ENCODE measurements at regions of chr17 and their contacts with region 1.

Region 1: DNA sequence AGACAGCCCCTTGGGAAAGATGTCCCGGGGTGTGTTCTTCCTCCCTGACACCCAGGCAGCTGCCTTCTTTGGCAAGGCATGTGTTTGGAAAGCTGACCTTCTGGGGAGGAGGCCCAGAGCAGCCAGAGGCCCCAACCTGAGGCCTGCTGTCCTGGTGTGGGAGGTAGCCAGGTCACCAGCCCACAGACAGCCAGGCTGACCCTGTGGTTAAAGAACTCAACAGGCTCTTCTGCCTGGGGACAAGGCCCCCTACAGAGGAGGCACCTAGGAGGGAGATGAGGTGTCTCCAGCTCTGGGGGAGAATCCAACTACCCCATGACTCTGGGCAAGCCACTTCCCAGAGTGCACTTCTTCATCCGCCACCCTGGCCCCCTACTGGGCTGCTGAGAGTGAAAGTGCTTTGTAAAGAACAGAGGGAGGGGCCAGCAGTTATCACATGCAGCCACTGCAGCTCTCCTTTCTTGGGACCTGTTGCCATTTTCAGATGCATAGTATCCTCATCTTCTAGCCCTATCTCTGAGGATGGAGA is 13.1 kb upstream of the SREBF1 start:
- DNase-seq: peak; percentile 72
- H3K4me3 Mint-ChIP-seq: peak overlapping the region; percentile 61
- H3K27ac Mint-ChIP-seq: peak overlapping the region; percentile 86
- H3K4me1 Mint-ChIP-seq: peaks cover 71% of the 10 kb centered on the region
- H3K27me3 Mint-ChIP-seq: no peaks in the 10 kb centered on the region

Region 2: GRCh38 chr17:17812211-17813057 is 37.5 kb before region 1 on chr17:
- intact Hi-C with region 1: loop called (anchors 1 kb)
- DNase-seq: peak; percentile 40
- H3K4me3 Mint-ChIP-seq: no peak overlapping the region
- H3K27ac Mint-ChIP-seq: no peak overlapping the region
- H3K4me1 Mint-ChIP-seq: peaks cover 5% of the 10 kb centered on the region
- H3K27me3 Mint-ChIP-seq: no peaks in the 10 kb centered on the region

Region 3: GRCh38 chr17:17823433-17824118 is 26.3 kb before region 1 on chr17:
- intact Hi-C with region 1: loop called (anchors 1 kb)
- DNase-seq: peak; percentile 82
- H3K4me3 Mint-ChIP-seq: peak overlapping the region; percentile 80
- H3K27ac Mint-ChIP-seq: peak overlapping the region; percentile 91
- H3K4me1 Mint-ChIP-seq: peaks cover 92% of the 10 kb centered on the region
- H3K27me3 Mint-ChIP-seq: no peaks in the 10 kb centered on the region

Region 4: DNA sequence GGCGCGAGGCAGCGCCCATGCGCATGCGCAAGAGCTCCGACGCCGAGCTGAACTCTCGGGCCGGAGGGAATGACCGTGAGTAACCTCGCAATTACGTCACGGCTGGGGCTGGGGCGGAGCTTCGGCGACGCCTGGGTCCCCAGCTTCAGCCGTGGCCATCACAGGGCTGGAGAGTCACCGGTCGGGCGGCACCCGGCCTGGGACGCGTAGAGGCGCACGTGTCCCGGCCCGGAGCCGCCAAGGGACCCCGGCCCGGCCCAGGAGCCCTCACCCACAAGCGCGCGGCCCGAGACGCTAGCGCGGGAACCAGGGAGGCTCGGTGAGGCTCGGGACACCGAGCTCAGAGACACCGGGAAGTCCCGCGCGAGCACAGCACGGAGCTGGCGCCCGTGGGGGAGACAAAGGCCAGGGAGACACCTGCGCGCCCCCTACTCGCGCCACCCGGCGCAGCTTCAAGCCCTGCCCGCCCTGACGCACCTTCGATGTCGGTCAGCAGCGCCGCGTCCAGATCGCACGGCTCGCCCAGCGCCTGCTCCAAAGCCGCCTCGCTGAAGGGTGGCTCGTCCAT is 13.6 kb before region 1 on chr17:
- intact Hi-C with region 1: loop called (anchors 1 kb)
- DNase-seq: peak; percentile 95
- H3K4me3 Mint-ChIP-seq: peak overlapping the region; percentile 93
- H3K27ac Mint-ChIP-seq: peak overlapping the region; percentile 86
- H3K4me1 Mint-ChIP-seq: peaks cover 69% of the 10 kb centered on the region
- H3K27me3 Mint-ChIP-seq: no peaks in the 10 kb centered on the region

Region 5: GRCh38 chr17:17959520-17960361 is 109.8 kb after region 1 on chr17:
- intact Hi-C with region 1: loop called (anchors 1 kb)
- DNase-seq: no peak
- H3K4me3 Mint-ChIP-seq: peak overlapping the region; percentile 85
- H3K27ac Mint-ChIP-seq: peak overlapping the region; percentile 100
- H3K4me1 Mint-ChIP-seq: peaks cover 55% of the 10 kb centered on the region
- H3K27me3 Mint-ChIP-seq: no peaks in the 10 kb centered on the region

Region 6: DNA sequence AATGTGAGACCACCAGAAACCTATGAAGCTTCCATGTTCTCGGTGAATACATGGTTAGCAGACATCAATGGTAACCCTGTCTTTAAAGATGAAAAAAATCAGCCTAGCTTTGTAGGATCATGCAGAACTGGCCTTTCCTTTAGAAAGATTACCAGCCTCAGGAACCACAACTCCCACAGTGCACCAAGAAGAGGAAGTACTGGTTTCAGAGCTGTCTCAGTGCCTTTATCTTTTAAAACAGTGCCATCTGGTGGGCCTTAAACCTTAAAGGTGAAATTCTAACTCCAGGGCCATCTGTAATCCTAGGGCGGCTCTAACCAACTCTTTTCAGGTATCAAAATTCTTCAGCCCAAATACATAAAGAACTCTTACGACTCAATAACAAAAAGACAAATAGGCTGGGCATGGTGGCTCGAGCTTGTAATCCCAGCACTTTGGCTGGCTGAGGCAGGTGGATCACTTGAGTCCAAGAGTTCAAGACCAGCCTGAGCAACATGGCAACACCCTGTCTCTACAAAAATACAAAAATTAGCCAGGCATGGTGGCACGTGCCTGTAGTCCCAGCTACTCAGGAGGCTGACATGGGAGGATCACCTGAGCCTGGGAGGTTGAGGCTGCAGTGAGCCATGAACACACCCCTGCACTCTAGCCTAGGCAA is 183.7 kb after region 1 on chr17:
- intact Hi-C with region 1: loop called (anchors 1 kb)
- DNase-seq: peak; percentile 57
- H3K4me3 Mint-ChIP-seq: no peak overlapping the region
- H3K27ac Mint-ChIP-seq: peak overlapping the region; percentile 21
- H3K4me1 Mint-ChIP-seq: peaks cover 38% of the 10 kb centered on the region
- H3K27me3 Mint-ChIP-seq: no peaks in the 10 kb centered on the region